ENCODE measurements at regions of chr14 and their contacts with region 1.

Region 1: GRCh38 chr14:45253068-45253753 is at the start of gene MIS18BP1:
- DNase-seq: peak; percentile 96 to 97
- ATAC-seq: peak; percentile 91
- total RNA-seq, gene MIS18BP1: 17.5 to 18.8 TPM

Region 2: DNA sequence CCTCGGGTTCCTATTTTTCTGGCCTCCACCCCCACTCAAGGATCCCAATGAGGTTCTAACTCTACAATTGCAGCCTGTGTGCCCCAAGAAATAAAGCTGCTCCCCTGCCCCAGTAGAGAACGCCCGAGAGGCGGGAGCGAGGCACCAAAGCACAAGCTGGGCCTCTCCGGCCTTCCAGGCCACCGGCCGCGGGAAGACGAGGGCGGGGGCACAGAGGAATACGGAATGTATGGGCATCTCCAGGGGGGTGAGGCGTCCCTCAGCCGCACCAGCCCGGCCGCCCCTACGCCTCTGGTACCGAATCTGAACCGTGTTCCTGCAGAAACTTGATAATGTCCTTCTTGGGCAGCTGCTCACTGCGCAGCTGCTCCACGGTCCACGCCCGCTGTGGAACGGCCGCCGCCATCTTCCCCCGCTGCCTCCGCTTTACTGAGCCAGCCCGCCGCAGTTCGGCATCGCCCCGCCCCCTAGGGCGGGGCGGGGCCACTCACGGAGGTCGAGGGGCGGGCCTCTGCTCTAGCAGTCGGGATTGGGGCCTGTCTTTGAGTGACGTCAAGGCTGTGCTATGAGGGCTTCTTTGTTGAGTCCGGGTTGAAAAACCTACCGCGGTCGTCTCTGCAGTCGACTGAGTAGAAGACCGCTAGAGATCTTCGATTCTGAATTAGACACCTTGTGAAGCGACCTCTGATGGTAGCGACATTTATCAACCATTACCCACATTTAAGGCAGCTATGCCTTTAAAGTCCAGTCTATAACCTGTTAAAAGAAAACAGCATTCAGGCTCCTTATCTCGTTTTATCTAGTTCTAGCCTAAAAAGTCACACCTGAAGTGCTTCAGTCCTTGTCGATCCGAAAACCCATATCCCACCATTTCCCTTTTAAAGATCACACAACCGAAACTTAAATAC is 118.9 kb before region 1 on chr14 and contains the start of gene FKBP3:
- intact Hi-C with region 1: loop called in 1 of 2 experiments (anchors 10 kb)
- DNase-seq: peak; percentile 95 to 99
- ATAC-seq: peak; percentile 92
- total RNA-seq, gene FKBP3: 43.8 to 46.5 TPM